MCF 10A (cell line): ENCODE measurements at regions of chr7 and their contacts with region 1.

Region 1: GRCh38 chr7:100852048-100852872 is at the start of gene SLC12A9:
- DNase-seq: peak; percentile 90
- H3K4me3 Mint-ChIP-seq: peak within 1 kb of the TSS; percentile 90
- H3K27ac Mint-ChIP-seq: peak within 1 kb of the TSS; percentile 22
- H3K4me1 Mint-ChIP-seq: peaks cover 6% of the 10 kb centered on the region
- H3K27me3 Mint-ChIP-seq: no peaks in the 10 kb centered on the region
- CTCF ChIP-seq: peak; percentile 95
- total RNA-seq, gene SLC12A9: 19.2 and 21.0 TPM in 2 replicates

Region 2: GRCh38 chr7:99868246-99868645 is 984.0 kb before region 1 on chr7:
- CTCF ChIA-PET with region 1: no interaction called
- POLR2A ChIA-PET with region 1: no interaction called
- intact Hi-C with region 1: no loop called
- DNase-seq: no peak
- H3K4me3 Mint-ChIP-seq: no peak overlapping the region
- H3K27ac Mint-ChIP-seq: no peak overlapping the region
- H3K4me1 Mint-ChIP-seq: no peaks in the 10 kb centered on the region
- H3K27me3 Mint-ChIP-seq: no peaks in the 10 kb centered on the region
- CTCF ChIP-seq: no peak

Region 3: DNA sequence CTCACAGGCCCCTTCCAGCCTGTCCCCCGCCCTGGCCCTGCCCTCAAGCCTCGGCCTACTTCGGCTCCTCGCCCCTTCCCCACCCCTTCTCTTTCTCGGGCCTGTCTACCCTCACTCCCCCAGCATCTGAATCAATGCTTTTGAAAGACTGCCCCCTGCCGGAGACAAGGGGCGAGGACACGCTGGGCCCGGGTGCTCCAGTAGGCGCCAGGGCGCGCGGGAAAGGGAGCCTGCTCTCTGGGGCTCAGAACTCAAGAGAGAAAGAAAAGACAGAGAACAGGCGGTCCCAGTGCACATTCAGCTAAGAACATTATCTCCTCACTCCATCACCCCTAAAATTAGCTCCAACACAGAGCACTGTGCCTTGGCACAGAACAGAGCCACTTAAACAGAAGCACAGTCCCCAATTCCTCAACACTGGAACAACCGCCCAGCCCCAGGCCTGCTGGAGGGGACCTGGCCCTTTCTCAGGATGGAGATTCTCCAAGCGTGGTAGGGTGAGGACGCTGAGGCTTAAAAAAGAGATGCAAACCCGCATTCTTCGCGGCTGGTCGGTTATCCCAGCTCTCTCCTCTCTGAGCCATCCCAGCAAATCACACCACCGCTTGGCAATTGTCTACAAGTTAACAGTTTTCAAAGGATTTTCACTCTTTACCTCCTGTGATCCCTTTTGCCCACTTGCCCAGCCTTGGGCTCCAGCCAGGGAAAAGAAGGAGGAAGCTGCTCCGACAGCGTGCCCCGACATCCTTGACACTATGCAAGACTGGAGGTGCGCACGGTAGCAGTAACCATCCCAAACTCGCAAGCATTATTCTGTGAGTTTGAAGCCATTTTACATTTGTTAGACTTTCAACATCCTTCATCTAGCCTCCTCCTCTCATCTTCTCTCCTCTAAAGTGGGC is 160.3 kb before region 1 on chr7:
- CTCF ChIA-PET with region 1: interaction called, 19 read pairs
- POLR2A ChIA-PET with region 1: interaction called, 7 read pairs
- intact Hi-C with region 1: no loop called
- DNase-seq: peak; percentile 82
- H3K4me3 Mint-ChIP-seq: peak overlapping the region; percentile 93
- H3K27ac Mint-ChIP-seq: peak overlapping the region; percentile 92
- H3K4me1 Mint-ChIP-seq: peaks cover 19% of the 10 kb centered on the region
- H3K27me3 Mint-ChIP-seq: no peaks in the 10 kb centered on the region
- CTCF ChIP-seq: peak; percentile 81

Region 4: GRCh38 chr7:100719523-100720319 is 132.5 kb before region 1 on chr7:
- CTCF ChIA-PET with region 1: interaction called, 31 read pairs
- POLR2A ChIA-PET with region 1: interaction called, 4 read pairs
- intact Hi-C with region 1: loop called (anchors 1 kb)
- DNase-seq: peak; percentile 27
- H3K4me3 Mint-ChIP-seq: no peak overlapping the region
- H3K27ac Mint-ChIP-seq: no peak overlapping the region
- H3K4me1 Mint-ChIP-seq: no peaks in the 10 kb centered on the region
- H3K27me3 Mint-ChIP-seq: peaks cover 48% of the 10 kb centered on the region
- CTCF ChIP-seq: peak; percentile 61

Region 5: DNA sequence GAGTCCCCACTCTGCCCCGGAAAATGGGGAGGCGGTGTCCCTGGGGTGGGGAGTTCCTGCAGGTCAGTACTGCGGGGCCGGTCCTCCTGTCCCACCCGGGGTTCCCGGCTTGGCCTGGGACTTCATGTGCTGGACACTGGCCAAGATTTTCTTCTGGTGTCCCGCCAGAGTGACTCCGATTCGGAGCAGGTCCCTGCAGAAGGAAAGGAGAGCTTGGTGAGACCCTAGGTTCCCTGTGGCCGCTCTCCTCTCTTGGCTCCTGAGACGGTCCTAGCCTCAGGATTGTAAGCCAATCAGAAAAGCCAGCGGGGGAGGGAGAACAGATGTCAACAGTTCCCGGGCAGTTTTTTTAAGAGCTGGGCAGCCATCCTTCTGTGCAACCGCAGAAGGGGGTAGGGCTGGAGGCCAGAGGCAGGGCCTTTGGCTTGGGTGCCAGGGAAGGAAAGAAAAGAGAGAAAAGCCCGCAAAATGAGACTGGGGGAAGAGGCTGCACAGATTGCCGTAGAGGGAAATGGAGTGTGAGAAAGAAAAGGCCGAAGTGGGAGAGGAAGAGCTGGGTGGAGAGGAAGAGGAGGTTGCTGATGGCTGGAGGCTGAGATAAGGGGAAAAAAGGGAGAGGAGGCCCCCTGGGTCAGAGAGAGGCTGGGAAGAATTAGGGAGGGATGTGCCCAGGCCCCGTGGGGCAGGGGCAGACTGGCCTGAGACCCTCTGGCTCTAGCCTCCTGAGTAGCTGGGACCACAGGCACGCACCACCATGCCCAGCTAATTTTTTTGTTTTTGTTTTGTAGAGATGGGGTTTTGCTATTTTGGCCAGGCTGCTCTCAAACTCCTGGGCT is 48.6 kb before region 1 on chr7:
- CTCF ChIA-PET with region 1: interaction called, 30 read pairs
- POLR2A ChIA-PET with region 1: interaction called, 53 read pairs
- intact Hi-C with region 1: loop called (anchors 1 kb)
- DNase-seq: peak; percentile 95
- H3K4me3 Mint-ChIP-seq: peak overlapping the region; percentile 45
- H3K27ac Mint-ChIP-seq: peak overlapping the region; percentile 59
- H3K4me1 Mint-ChIP-seq: peaks cover 38% of the 10 kb centered on the region
- H3K27me3 Mint-ChIP-seq: no peaks in the 10 kb centered on the region
- CTCF ChIP-seq: no peak

Region 6: GRCh38 chr7:100837099-100837836 is 15.0 kb before region 1 on chr7:
- CTCF ChIA-PET with region 1: interaction called, 13 read pairs
- POLR2A ChIA-PET with region 1: interaction called, 13 read pairs
- intact Hi-C with region 1: no loop called
- DNase-seq: peak; percentile 93
- H3K4me3 Mint-ChIP-seq: peak overlapping the region; percentile 65
- H3K27ac Mint-ChIP-seq: peak overlapping the region; percentile 75
- H3K4me1 Mint-ChIP-seq: peaks cover 10% of the 10 kb centered on the region
- H3K27me3 Mint-ChIP-seq: no peaks in the 10 kb centered on the region
- CTCF ChIP-seq: no peak

Region 7: DNA sequence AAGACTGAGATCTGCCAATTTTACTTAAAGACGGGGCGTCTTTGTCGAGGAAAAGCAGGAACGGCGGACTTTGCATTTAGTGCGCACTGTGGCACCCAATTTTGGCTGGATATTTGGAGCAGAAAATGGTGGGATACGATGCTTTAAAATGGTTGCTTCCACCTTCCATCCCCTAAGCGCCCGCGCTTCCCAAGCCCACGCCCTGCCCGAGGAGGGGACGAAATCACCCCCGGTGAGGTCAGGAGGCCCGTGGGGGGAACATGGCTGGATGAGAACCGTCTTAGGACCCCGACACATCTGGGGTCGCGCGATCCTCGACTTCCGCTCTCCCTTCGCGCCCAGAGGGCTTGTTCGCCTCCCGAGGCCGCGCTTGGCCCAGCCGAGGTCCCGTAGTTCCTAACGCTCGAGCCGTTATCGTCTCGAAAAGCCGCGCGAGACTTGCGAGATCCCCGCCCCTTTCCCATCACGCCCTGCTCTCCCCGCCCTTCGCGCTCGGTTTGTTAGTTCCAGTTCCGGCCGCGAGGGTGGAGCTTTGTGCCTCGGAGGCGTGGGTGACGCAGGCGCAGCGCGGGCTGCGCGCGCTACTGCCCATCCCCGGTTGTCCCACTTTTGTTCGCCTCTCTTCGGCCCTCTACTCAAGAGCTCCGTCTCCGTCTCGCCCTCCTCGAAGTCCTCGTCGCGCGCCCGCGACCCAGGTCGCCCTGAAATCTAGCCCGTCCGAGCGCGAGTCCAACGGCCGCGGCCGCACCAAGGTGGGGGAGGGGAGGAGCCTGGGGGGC is 22.5 kb after region 1 on chr7 and contains the start of gene SRRT:
- CTCF ChIA-PET with region 1: no interaction called
- POLR2A ChIA-PET with region 1: interaction called, 16 read pairs
- intact Hi-C with region 1: no loop called
- DNase-seq: peak; percentile 99
- H3K4me3 Mint-ChIP-seq: peak within 1 kb of the TSS; percentile 97
- H3K27ac Mint-ChIP-seq: peak within 1 kb of the TSS; percentile 98
- H3K4me1 Mint-ChIP-seq: peaks cover 30% of the 10 kb centered on the region
- H3K27me3 Mint-ChIP-seq: no peaks in the 10 kb centered on the region
- CTCF ChIP-seq: no peak
- total RNA-seq, gene SRRT: 111 and 142 TPM in 2 replicates